H1 (cell line): ENCODE measurements at regions of chr6 and their contacts with region 1.

Region 1: GRCh38 chr6:3330199-3330598 is 71.5 kb downstream of the PSMG4 start:
- DNase-seq: peak in 1 of 2 experiments; percentile 80
- H3K4me3 ChIP-seq: no peak overlapping the region
- H3K27ac ChIP-seq: no peak overlapping the region
- H3K4me1 ChIP-seq: peaks cover 6 to 20% (median 16%) of the 10 kb centered on the region in 4 experiments
- H3K27me3 ChIP-seq: no peaks in the 10 kb centered on the region
- CTCF ChIP-seq: peak; percentile 41 to 78 (median 77); a peak in 3 of 4 replicates
- EP300 ChIP-seq: no peak
- POLR2A ChIP-seq: no peak
- RAD21 ChIP-seq: peak; percentile 12 to 41; a peak in 2 of 4 replicates

Region 2: DNA sequence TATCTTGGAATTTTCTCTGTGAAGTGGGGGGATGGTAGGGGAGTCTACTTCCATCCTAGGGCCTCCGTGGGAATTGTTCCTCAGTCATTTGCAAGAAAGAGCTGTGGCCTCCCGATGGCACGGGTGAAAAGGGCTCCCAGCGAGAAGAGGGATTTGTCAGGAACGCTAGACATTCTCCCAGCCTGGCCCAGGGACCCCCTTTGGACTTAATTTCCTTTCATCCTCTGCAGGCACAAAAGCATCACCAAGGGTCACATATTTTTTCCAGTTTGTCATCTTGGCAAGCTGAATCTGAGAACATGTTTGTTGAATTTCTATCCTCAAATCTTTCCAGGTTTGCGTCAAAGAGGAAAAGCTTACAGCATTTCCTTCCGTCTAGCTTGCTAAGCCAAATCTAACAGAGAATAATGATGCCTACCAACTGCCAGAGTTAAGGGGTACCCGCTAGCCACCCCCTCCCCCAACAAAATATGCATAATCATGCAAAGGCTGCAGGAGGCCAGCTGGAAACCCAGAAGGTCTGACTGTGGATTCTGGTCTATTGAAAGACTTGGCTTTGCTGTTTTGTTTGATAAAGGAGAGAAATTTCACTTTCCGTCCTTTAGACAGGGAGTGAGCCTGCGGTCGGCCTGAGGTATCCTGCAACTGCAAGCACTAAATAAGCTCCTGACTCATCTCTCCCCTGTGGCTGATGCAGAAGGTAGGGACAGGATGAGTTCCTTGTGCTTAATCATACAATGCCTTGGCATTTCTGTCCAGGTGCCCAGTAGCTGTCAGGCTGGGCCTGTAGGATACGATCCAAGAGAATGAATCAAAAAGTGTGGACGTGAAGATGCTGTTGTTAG is 48.3 kb before region 1 on chr6:
- CTCF ChIA-PET with region 1: interaction called, 14 read pairs
- POLR2A ChIA-PET with region 1: no interaction called
- DNase-seq: peak in 1 of 2 experiments; percentile 21
- H3K4me3 ChIP-seq: peak overlapping the region in 1 of 4 experiments; percentile 12; a peak in 3 of 8 replicates
- H3K27ac ChIP-seq: no peak overlapping the region
- H3K4me1 ChIP-seq: peaks cover 11 to 15% (median 15%) of the 10 kb centered on the region in 4 experiments
- H3K27me3 ChIP-seq: no peaks in the 10 kb centered on the region
- CTCF ChIP-seq: no peak
- EP300 ChIP-seq: no peak
- POLR2A ChIP-seq: no peak
- RAD21 ChIP-seq: no peak

Region 3: DNA sequence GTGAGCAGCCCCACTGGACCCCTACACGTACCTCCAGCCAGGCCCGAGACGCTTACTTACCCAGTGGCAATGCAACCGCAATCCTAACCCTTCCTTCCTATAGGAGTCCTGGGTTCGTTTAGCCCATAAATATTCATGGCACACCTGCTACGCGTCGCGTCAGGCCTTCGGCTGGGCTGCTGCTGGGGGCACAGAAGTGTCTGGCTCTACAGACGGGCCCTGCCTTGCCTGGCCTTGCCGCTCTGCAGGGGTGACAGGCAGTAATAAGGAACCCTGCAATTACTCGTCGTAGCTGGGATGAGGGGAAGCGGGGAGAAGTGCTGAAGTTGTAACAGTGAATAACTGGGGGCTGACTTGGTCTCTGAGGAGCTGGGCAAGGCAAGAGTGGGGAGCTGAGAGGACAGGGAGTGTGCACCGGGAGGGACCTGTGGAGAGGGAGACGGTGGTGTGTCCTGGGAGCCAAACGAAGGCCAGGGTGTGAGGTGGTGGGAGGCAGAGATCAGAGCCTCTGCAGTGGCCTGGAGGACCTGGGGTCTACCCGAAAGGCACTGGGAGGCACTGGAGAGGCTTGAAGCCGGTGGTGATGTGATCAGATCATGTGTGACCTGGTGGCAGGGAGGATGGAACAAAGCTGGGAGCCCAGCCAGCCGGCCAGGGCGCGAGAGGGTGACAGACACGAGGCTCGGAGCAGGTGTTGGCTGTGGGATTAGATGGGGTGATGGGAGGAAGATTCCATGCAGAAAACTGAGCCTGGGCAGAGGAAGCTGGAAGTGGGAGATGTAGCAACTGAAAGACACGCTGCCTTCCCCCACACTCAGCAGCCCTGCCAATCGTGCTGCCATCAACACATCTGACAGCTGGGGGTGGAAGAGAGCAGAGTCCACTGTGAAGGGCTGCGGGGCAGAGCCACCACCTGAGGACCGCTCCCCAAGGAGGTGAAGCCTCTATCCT is 35.0 kb before region 1 on chr6:
- CTCF ChIA-PET with region 1: interaction called, 19 read pairs
- POLR2A ChIA-PET with region 1: no interaction called
- DNase-seq: no peak
- H3K4me3 ChIP-seq: no peak overlapping the region
- H3K27ac ChIP-seq: no peak overlapping the region
- H3K4me1 ChIP-seq: no peaks in the 10 kb centered on the region
- H3K27me3 ChIP-seq: no peaks in the 10 kb centered on the region
- CTCF ChIP-seq: peak; percentile 43 to 64 (median 60); a peak in 3 of 4 replicates
- EP300 ChIP-seq: no peak
- POLR2A ChIP-seq: no peak
- RAD21 ChIP-seq: peak; percentile 66 to 74

Region 4: DNA sequence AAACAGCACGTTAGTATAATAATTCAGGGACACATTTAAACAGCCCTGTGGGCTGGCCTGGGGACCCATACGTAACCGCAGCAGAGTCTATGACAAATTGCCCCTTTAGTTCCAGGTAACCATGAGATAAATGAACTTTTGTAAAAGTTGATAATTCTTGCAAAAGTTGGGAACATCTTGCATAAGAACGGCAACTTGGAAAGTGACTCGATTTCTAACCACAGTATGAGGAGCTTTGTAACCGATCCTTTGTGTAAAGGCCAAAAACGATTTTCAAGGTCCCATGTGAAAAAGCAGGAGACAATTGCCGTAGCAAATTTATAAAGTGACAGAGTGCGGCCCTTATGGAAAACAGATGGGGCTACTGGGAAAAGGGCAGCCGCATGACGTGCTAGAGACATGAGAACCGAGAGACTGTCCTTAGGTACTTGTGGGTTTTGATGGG is 10.2 kb after region 1 on chr6:
- CTCF ChIA-PET with region 1: interaction called, 11 read pairs
- POLR2A ChIA-PET with region 1: interaction called, 3 read pairs
- DNase-seq: no peak
- H3K4me3 ChIP-seq: no peak overlapping the region
- H3K27ac ChIP-seq: no peak overlapping the region
- H3K4me1 ChIP-seq: peaks cover 20 to 44% (median 32%) of the 10 kb centered on the region in 4 experiments
- H3K27me3 ChIP-seq: no peaks in the 10 kb centered on the region
- CTCF ChIP-seq: no peak
- EP300 ChIP-seq: no peak
- POLR2A ChIP-seq: no peak
- RAD21 ChIP-seq: no peak

Region 5: GRCh38 chr6:3393836-3394202 is 63.6 kb after region 1 on chr6:
- CTCF ChIA-PET with region 1: interaction called, 13 read pairs
- POLR2A ChIA-PET with region 1: no interaction called
- DNase-seq: no peak
- H3K4me3 ChIP-seq: no peak overlapping the region
- H3K27ac ChIP-seq: no peak overlapping the region
- H3K4me1 ChIP-seq: no peaks in the 10 kb centered on the region
- H3K27me3 ChIP-seq: no peaks in the 10 kb centered on the region
- CTCF ChIP-seq: no peak
- EP300 ChIP-seq: no peak
- POLR2A ChIP-seq: no peak
- RAD21 ChIP-seq: no peak

Region 6: DNA sequence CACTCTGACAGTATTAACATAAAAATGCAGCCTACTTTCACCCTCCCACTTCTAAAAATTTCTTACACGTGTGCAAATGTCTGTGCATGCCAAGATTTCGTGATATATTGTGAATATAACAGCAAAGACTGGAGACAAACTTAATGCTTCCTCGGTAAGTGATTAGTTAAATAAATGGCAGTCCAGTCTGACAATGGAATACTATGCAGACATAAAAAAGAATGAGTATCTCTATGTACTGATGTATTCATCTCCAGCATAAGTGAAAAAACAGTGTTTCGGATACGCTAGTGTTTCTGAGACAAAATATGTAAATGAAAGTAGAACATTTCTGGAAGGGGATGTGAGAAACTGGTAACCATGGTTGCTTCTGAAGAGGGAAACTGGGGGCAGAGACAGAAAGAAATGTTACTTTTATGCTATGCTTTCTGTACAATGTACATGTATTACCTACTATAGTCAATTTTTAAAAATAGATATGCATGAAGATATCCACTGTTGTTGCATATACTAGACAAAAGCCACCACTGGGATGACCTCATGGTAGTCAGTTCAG is 119.6 kb after region 1 on chr6:
- CTCF ChIA-PET with region 1: no interaction called
- POLR2A ChIA-PET with region 1: no interaction called
- DNase-seq: no peak
- H3K4me3 ChIP-seq: no peak overlapping the region
- H3K27ac ChIP-seq: no peak overlapping the region
- H3K4me1 ChIP-seq: peaks cover 0 to 16% (median 5%) of the 10 kb centered on the region in 4 experiments; a peak in 6 of 7 replicates
- H3K27me3 ChIP-seq: peaks cover 0 to 4% (median 1%) of the 10 kb centered on the region in 4 experiments; a peak in 3 of 7 replicates
- CTCF ChIP-seq: no peak
- EP300 ChIP-seq: no peak
- POLR2A ChIP-seq: no peak
- RAD21 ChIP-seq: no peak

Region 7: GRCh38 chr6:3526962-3527650 is 196.9 kb after region 1 on chr6:
- CTCF ChIA-PET with region 1: no interaction called
- POLR2A ChIA-PET with region 1: no interaction called
- DNase-seq: no peak
- H3K4me3 ChIP-seq: no peak overlapping the region
- H3K27ac ChIP-seq: no peak overlapping the region
- H3K4me1 ChIP-seq: peaks cover 0 to 9% (median 3%) of the 10 kb centered on the region in 4 experiments; a peak in 3 of 7 replicates
- H3K27me3 ChIP-seq: peaks cover 0 to 2% (median 0%) of the 10 kb centered on the region in 4 experiments; a peak in 1 of 7 replicates
- CTCF ChIP-seq: no peak
- EP300 ChIP-seq: no peak
- POLR2A ChIP-seq: no peak
- RAD21 ChIP-seq: no peak